ENCODE measurements at regions of chr1 and their contacts with region 1.

Region 1: GRCh38 chr1:153775458-153776327 is 486 bp downstream of the SLC27A3 start:
- DNase-seq: peak; percentile 76 to 78
- ATAC-seq: peak; percentile 74 to 87 (median 84)
- H3K4me3 ChIP-seq: peak overlapping the region; percentile 47
- H3K4me3 Mint-ChIP-seq: peak overlapping the region; percentile 91
- H3K27ac ChIP-seq: peak overlapping the region; percentile 89
- H3K27ac Mint-ChIP-seq: peak overlapping the region; percentile 92
- H3K4me1 ChIP-seq: peaks cover 51% of the 10 kb centered on the region
- H3K4me1 Mint-ChIP-seq: peaks cover 41 to 58% of the 10 kb centered on the region in 2 donors
- H3K27me3 ChIP-seq: no peaks in the 10 kb centered on the region
- H3K27me3 Mint-ChIP-seq: no peaks in the 10 kb centered on the region
- CTCF ChIP-seq: no peak

Region 2: GRCh38 chr1:153670859-153671627 is 104.7 kb before region 1 on chr1 and contains the start of gene ILF2:
- intact Hi-C with region 1: loop called (anchors 10 kb)
- DNase-seq: peak; percentile 93 to 98
- ATAC-seq: peak; percentile 85 to 97 (median 91)
- H3K4me3 ChIP-seq: peak within 1 kb of the TSS; percentile 88
- H3K4me3 Mint-ChIP-seq: no peak within 1 kb of the TSS
- H3K27ac ChIP-seq: peak within 1 kb of the TSS; percentile 92
- H3K27ac Mint-ChIP-seq: no peak within 1 kb of the TSS
- H3K4me1 ChIP-seq: peaks cover 20% of the 10 kb centered on the region
- H3K4me1 Mint-ChIP-seq: peaks cover 8 to 10% of the 10 kb centered on the region in 2 donors
- H3K27me3 ChIP-seq: no peaks in the 10 kb centered on the region
- H3K27me3 Mint-ChIP-seq: no peaks in the 10 kb centered on the region
- CTCF ChIP-seq: peak; percentile 23
- total RNA-seq, gene ILF2: 97.6 to 134 (median 110) TPM

Region 3: GRCh38 chr1:153727463-153728304 is 48.0 kb before region 1 on chr1 and contains the start of gene INTS3:
- intact Hi-C with region 1: loop called (anchors 5 kb)
- DNase-seq: peak; percentile 96 to 100
- ATAC-seq: peak; percentile 97 to 100 (median 98)
- H3K4me3 ChIP-seq: peak within 1 kb of the TSS; percentile 79
- H3K4me3 Mint-ChIP-seq: peak within 1 kb of the TSS; percentile 93
- H3K27ac ChIP-seq: peak within 1 kb of the TSS; percentile 95
- H3K27ac Mint-ChIP-seq: peak within 1 kb of the TSS; percentile 89 to 91
- H3K4me1 ChIP-seq: peaks cover 18% of the 10 kb centered on the region
- H3K4me1 Mint-ChIP-seq: peaks cover 7 to 13% of the 10 kb centered on the region in 2 donors
- H3K27me3 ChIP-seq: no peaks in the 10 kb centered on the region
- H3K27me3 Mint-ChIP-seq: no peaks in the 10 kb centered on the region
- CTCF ChIP-seq: no peak
- total RNA-seq, gene INTS3: 44.3 to 55.3 (median 44.5) TPM

Region 4: GRCh38 chr1:153790966-153791647 is 15.4 kb after region 1 on chr1:
- intact Hi-C with region 1: loop called (anchors 1 kb)
- DNase-seq: peak in 1 of 2 donors; percentile 49
- ATAC-seq: peak; percentile 92 to 96 (median 93)
- H3K4me3 ChIP-seq: no peak overlapping the region
- H3K4me3 Mint-ChIP-seq: peak overlapping the region; percentile 69
- H3K27ac ChIP-seq: peak overlapping the region; percentile 83
- H3K27ac Mint-ChIP-seq: peak overlapping the region; percentile 79 to 83
- H3K4me1 ChIP-seq: peaks cover 58% of the 10 kb centered on the region
- H3K4me1 Mint-ChIP-seq: peaks cover 42 to 59% of the 10 kb centered on the region in 2 donors
- H3K27me3 ChIP-seq: no peaks in the 10 kb centered on the region
- H3K27me3 Mint-ChIP-seq: no peaks in the 10 kb centered on the region
- CTCF ChIP-seq: no peak

Region 5: GRCh38 chr1:153805042-153805745 is 29.5 kb after region 1 on chr1:
- intact Hi-C with region 1: loop called (anchors 1 kb)
- DNase-seq: peak; percentile 59 to 93
- ATAC-seq: peak; percentile 94 to 97 (median 96)
- H3K4me3 ChIP-seq: no peak overlapping the region
- H3K4me3 Mint-ChIP-seq: peak overlapping the region; percentile 54
- H3K27ac ChIP-seq: peak overlapping the region; percentile 93
- H3K27ac Mint-ChIP-seq: peak overlapping the region; percentile 89 to 97
- H3K4me1 ChIP-seq: peaks cover 39% of the 10 kb centered on the region
- H3K4me1 Mint-ChIP-seq: peaks cover 23 to 37% of the 10 kb centered on the region in 2 donors
- H3K27me3 ChIP-seq: no peaks in the 10 kb centered on the region
- H3K27me3 Mint-ChIP-seq: no peaks in the 10 kb centered on the region
- CTCF ChIP-seq: no peak